ENCODE measurements at regions of chr6 and their contacts with region 1.

Region 1: DNA sequence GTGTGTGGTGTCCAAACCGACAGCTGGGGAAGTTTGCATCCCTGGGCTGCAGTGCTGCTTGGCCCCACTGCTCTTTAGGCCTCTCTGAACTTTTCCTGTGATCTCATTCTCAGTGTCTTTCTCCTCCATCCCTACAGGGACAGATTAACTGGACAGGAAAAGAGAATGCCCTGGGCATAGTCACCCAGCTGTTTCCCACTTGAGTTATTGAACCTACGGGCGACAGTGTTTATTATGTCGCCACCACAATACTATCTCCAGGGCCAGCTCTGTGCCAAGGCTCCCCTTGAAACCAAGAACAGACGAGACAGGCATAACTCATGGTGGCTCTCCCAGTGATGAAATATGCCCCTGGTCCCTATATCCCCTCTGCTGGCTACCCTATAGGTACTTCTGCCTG is 147.8 kb upstream of the EPHA7 start:
- DNase-seq: no peak
- H3K4me3 ChIP-seq: no peak overlapping the region
- H3K27ac ChIP-seq: peak overlapping the region; percentile 78 to 86 (median 82)
- H3K4me1 ChIP-seq: peaks cover 0 to 67% (median 40%) of the 10 kb centered on the region in 4 donors
- H3K27me3 ChIP-seq: no peaks in the 10 kb centered on the region
- CTCF ChIP-seq: no peak
- EP300 ChIP-seq: no peak
- POLR2A ChIP-seq: no peak

Region 2: DNA sequence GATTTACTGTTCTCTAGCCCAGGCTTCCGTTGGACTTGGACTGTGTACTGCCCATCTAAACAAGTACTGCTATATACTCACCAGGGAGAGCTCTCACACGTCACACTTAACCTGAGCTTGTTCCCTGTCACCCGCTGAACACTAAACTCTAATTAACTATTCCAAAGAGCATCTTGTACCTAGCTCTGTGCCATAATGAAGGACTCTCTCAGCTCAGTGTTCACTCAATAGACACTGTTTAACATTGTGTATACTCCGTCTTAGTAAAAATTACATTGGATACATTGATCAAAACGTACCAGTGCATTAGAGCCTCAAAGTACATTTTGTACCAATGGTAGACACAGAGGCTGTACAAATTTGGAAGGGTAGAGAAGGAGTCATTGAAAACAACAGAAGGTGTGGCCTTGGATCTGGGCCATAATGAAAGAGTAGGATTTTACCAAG is 92.4 kb before region 1 on chr6:
- intact Hi-C with region 1: loop called (anchors 2 kb)
- DNase-seq: peak; percentile 84
- H3K4me3 ChIP-seq: no peak overlapping the region
- H3K27ac ChIP-seq: peak overlapping the region; percentile 52 to 80 (median 72)
- H3K4me1 ChIP-seq: peaks cover 0 to 20% (median 0%) of the 10 kb centered on the region in 4 donors
- H3K27me3 ChIP-seq: no peaks in the 10 kb centered on the region
- CTCF ChIP-seq: no peak
- EP300 ChIP-seq: peak; percentile 25 to 92 (median 52)
- POLR2A ChIP-seq: no peak

Measured in sigmoid colon (tissue), 7 donors.